Activated naive CD4-positive, alpha-beta T cell treated with anti-CD3 and anti-CD28 coated beads for 36 hours (primary cell): ENCODE measurements at regions of chr10 and their contacts with region 1.

Region 1: DNA sequence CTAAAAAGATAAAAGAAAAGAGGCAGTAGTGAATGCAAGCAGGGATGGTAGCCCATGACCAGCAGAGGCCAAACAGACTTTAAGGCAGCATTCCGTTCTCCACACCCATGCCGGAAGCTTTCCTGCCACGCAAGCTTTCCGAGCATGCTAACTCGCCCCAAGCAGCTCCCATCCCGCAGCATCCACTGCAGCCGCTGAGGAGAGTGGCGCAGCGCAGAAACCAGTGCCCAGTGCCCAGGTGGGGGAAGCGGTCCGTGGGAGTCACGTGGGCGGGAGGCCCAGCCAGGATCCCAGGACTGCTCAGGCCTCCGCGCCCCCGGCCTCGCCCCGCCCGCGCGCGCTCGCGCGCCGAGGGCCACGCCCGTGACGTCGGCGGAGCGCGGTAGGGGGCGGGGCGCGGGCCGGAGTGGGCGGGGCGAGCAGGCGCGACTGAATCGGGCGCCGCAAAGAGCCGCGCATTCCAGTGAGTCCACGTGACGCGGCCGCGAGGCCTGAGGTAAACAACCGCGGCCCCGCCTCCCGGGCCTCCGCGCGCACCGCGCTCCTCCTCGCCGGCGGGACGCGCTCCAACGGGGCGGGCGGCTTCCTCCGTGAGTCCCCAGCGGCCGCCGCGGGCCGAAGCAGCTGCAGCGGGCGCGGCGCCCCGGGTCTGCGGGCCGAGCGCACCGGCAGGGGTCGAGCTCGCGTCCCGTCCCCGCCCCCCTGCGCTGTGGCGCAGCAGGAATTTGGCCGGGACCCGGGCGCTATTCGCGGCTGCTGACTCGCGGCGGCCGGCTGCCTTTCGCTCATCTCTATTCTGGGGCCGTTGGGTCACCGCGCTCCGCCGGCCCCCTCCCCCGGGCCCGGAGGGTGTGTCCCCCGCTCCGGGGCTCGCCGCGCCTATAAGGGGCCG is at the start of gene OTUD1:
- DNase-seq: peak; percentile 94
- H3K4me3 Mint-ChIP-seq: peak within 1 kb of the TSS; percentile 94
- H3K27ac Mint-ChIP-seq: peak within 1 kb of the TSS; percentile 84
- H3K4me1 Mint-ChIP-seq: peaks cover 33% of the 10 kb centered on the region
- H3K27me3 Mint-ChIP-seq: no peaks in the 10 kb centered on the region
- total RNA-seq, gene OTUD1: 15.7 to 16.0 TPM

Region 2: GRCh38 chr10:22251751-22252223 is 1187.0 kb before region 1 on chr10:
- CTCF ChIA-PET with region 1: no interaction called
- intact Hi-C with region 1: loop called (anchors 10 kb)
- DNase-seq: peak; percentile 74
- H3K4me3 Mint-ChIP-seq: peak overlapping the region; percentile 99
- H3K27ac Mint-ChIP-seq: peak overlapping the region; percentile 99
- H3K4me1 Mint-ChIP-seq: peaks cover 34% of the 10 kb centered on the region
- H3K27me3 Mint-ChIP-seq: peaks cover 5% of the 10 kb centered on the region

Region 3: DNA sequence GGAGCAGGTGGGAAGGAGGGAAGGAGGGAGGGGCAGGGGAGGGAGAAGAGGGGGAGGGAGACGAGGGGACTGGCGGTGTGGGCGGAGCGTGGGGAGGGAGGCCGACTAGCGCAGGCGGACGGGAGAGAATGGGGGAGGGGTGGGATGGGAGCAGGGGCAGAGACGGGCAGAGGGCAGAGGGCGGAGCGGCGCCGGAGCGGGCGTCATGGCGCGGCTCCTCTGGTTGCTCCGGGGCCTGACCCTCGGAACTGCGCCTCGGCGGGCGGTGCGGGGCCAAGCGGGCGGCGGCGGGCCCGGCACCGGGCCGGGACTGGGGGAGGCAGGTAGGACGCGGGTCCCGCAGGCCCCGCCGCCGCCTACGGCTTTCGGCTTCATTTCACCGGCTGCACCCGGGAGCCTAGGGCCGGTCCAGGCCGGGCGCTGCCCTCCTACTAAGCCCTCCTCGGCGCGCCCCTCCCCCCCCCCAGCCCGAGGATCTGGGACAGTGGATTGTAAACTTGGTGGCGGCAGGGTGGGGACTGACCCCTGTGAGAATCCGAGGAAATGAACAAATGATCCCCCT is 343.3 kb before region 1 on chr10 and contains the start of gene MSRB2:
- CTCF ChIA-PET with region 1: no interaction called
- intact Hi-C with region 1: loop called (anchors 2 kb)
- DNase-seq: peak; percentile 92
- H3K4me3 Mint-ChIP-seq: peak within 1 kb of the TSS; percentile 97
- H3K27ac Mint-ChIP-seq: peak within 1 kb of the TSS; percentile 90
- H3K4me1 Mint-ChIP-seq: peaks cover 34% of the 10 kb centered on the region
- H3K27me3 Mint-ChIP-seq: no peaks in the 10 kb centered on the region
- total RNA-seq, gene MSRB2: 13.9 to 16.0 TPM

Region 4: GRCh38 chr10:23448802-23449570 is 10.2 kb after region 1 on chr10:
- CTCF ChIA-PET with region 1: interaction called, 5 read pairs
- intact Hi-C with region 1: loop called (anchors 1 kb)
- DNase-seq: no peak
- H3K4me3 Mint-ChIP-seq: peak overlapping the region; percentile 35
- H3K27ac Mint-ChIP-seq: peak overlapping the region; percentile 92
- H3K4me1 Mint-ChIP-seq: peaks cover 42% of the 10 kb centered on the region
- H3K27me3 Mint-ChIP-seq: no peaks in the 10 kb centered on the region

Region 5: DNA sequence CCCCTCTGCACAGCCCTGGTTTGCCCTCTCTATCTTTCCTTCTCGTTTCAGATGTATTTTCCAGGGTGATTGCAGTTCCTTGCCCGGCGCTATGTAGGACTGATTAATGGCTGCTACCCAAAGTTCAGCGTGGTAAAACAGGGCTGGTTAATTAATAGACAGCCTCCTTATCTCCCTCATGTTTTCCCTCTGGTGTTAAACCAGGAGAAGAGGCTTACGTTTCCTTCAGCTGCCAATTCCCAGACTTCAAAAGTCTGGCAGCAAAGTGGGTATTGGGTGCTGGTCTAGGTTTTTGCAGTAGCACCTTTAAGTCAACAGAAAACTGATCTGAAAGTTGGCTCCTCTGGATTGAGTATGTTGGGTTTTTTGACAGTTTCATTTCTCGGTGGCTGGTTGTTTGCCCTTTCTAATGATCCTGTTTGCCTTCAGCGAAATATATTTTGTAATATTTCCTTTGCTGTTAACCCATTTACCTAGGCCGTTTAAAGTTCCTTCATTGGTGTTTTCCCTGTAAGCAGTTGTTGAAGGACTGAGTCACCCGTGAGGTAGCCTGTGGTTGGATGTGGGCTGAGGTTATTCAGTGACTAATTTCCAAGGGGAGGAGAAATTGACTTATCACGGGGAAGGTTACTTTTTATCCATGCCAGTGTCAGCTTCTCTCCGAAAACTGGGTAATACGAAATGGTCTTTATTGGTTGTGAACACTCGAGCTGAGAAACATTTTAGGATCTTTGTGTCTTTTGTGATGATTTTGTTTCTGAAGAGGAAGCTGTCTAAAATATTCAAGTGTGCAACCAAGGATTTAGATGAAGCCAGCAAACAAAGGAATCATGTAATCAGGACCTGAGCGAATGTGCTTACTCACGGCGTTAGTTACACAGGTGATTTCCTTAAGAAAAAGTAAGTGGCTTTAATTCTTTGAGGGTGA is 1027.4 kb after region 1 on chr10:
- CTCF ChIA-PET with region 1: no interaction called
- intact Hi-C with region 1: loop called (anchors 10 kb)
- DNase-seq: peak; percentile 76
- H3K4me3 Mint-ChIP-seq: no peak overlapping the region
- H3K27ac Mint-ChIP-seq: peak overlapping the region; percentile 28
- H3K4me1 Mint-ChIP-seq: peaks cover 31% of the 10 kb centered on the region
- H3K27me3 Mint-ChIP-seq: peaks cover 8% of the 10 kb centered on the region

Region 6: DNA sequence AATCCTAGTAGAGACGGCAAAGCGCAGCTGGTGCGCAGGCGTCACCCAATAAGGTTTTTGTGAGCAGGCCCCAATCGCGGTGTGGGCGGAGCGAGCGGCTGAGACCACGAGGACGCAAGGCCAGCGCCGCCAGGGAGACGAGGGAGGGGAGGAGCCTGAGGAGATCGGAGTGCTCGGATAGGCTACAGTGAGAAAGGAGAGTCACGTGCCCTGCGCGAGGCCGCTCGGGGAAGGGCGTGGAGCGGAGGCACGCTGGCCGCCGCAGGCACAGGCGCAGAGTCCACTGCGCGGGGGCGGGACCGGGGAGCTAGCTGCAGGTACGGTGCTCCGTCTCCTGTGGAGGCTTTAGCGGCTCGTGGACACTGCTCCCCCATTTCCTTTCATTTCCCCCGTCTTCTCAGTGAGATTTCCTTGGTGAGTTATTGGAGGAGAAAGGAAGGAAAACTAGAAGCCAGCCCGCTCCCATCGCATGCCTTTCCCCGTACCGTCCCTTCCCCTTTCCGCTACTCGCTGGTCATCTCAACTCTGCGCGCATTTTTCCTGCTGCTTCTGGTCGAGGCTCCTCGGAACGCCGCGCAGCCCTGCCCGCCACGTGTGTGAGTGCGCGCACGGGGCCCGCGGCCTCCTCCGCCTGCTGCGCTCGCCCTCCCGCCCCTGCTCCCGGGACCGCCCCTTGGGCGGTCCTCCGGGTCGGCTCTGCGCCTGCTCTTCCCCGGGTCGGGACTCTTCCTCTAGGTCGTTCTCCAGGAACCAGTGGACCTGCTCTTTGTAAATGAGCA is 1577.8 kb after region 1 on chr10 and contains the start of gene THNSL1:
- CTCF ChIA-PET with region 1: no interaction called
- intact Hi-C with region 1: loop called (anchors 5 kb)
- DNase-seq: peak; percentile 97
- H3K4me3 Mint-ChIP-seq: peak within 1 kb of the TSS; percentile 93
- H3K27ac Mint-ChIP-seq: peak within 1 kb of the TSS; percentile 99
- H3K4me1 Mint-ChIP-seq: peaks cover 19% of the 10 kb centered on the region
- H3K27me3 Mint-ChIP-seq: no peaks in the 10 kb centered on the region
- total RNA-seq, gene THNSL1: 6.3 to 7.1 TPM